ENCODE measurements at regions of chr17 and their contacts with region 1.

Region 1: DNA sequence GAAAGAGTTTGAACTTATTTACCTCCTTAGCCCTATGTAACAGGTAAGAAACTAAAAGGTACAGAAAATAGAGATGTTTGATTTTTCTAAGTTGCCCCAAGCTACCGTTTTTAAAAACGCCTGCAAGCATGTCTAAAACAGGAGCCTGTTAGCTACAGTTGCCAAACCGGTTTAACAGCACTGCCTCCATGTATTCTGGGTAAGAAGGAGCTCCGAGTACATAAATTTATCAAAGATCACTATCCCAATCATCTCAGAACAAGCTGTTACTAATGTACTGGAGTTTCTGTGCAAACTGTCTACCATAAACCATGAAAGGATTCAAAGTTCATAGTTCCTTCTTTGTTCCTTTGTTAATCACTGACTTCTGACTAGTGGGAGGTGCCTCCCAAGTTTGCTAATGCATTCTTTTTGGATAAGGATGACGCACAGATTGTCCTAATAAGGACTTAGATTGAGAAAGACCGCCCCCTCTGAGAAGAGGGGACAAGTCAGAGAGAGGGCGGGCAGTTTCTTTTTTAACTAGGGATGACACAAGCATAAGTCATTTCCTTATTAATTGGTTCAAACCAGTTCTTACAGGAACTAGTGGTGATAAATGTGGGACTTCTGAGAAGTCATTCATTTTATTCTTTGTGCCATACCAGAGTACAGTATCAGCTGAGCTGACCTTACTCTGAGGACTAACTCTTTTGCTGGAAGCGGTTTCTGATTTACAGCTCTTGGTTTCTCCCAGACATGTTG is 55.3 kb downstream of the TUBD1 start:
- DNase-seq: peak in 1 of 2 experiments; percentile 52
- H3K4me3 ChIP-seq: peak overlapping the region; percentile 87 to 98 (median 90)
- H3K27ac ChIP-seq: peak overlapping the region; percentile 96
- H3K4me1 ChIP-seq: peaks cover 0 to 4% (median 0%) of the 10 kb centered on the region in 4 experiments; a peak in 5 of 7 replicates
- H3K27me3 ChIP-seq: no peaks in the 10 kb centered on the region
- CTCF ChIP-seq: no peak
- EP300 ChIP-seq: peak in 1 of 2 experiments; percentile 23; a peak in 1 of 3 replicates
- POLR2A ChIP-seq: peak; percentile 97 to 99
- RAD21 ChIP-seq: no peak

Region 2: GRCh38 chr17:59707114-59707970 is 130.1 kb before region 1 on chr17 and contains the starts of genes PTRH2 and VMP1:
- CTCF ChIA-PET with region 1: no interaction called
- POLR2A ChIA-PET with region 1: interaction called, 13 read pairs
- DNase-seq: peak; percentile 92 to 98
- H3K4me3 ChIP-seq: peak within 1 kb of the TSS; percentile 94 to 99 (median 98)
- H3K27ac ChIP-seq: peak within 1 kb of the TSS; percentile 81
- H3K4me1 ChIP-seq: no peaks in the 10 kb centered on the region; a peak in 1 of 7 replicates
- H3K27me3 ChIP-seq: no peaks in the 10 kb centered on the region
- CTCF ChIP-seq: no peak
- EP300 ChIP-seq: no peak
- POLR2A ChIP-seq: peak; percentile 95 to 98
- RAD21 ChIP-seq: no peak
- total RNA-seq, gene PTRH2: 36.5 and 39.4 TPM in 2 replicates
- total RNA-seq, gene VMP1: 92.6 and 92.7 TPM in 2 replicates

Region 3: DNA sequence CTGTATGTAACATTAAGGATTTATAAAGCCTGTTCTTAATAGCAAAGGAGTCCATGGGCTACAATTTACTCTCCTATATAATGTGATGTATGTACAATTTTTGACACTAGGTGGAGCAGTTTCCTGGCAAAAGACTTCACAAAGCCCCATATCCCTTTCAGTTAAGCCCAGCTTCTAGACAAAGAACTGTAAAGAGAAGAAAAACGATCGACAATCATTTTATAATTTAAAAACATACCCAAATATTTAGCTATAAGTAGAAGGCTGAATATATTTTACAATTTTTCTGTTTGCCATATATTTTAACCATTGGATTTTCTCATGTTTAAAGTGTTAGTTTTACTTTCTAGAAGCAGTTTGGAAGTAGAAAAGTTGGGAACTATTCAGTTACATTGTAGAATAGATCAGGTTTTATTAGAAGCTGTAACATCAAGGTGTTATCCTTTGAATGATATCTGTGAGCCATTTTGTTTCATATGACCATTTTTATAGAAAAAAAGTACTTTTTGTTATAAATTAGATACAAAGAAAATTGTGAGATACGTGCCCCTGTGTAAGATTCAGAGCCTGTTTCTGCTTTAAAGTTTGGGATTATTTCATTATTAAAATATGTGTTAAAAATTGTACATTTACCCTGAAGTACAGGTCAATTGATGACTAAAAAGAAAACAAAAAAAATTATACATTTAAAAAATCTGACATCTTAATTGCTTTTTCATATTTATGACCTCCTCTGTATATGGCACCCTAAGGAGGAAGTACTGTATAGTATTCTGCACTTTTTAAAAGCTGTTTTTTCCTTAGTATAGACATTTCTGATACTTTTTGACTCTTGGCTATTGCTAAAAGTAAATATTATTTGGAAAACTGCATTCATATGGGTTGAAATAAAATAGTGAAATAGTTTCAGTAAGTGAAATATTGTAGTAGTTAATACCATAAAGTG is 83.7 kb before region 1 on chr17:
- CTCF ChIA-PET with region 1: interaction called, 32 read pairs
- POLR2A ChIA-PET with region 1: interaction called, 24 read pairs
- DNase-seq: no peak
- H3K4me3 ChIP-seq: no peak overlapping the region
- H3K27ac ChIP-seq: no peak overlapping the region
- H3K4me1 ChIP-seq: peaks cover 0 to 2% (median 0%) of the 10 kb centered on the region in 4 experiments; a peak in 1 of 7 replicates
- H3K27me3 ChIP-seq: no peaks in the 10 kb centered on the region
- CTCF ChIP-seq: peak in 2 of 3 experiments; percentile 54 to 59; a peak in 2 of 4 replicates
- EP300 ChIP-seq: no peak
- POLR2A ChIP-seq: no peak
- RAD21 ChIP-seq: peak; percentile 88

Region 4: DNA sequence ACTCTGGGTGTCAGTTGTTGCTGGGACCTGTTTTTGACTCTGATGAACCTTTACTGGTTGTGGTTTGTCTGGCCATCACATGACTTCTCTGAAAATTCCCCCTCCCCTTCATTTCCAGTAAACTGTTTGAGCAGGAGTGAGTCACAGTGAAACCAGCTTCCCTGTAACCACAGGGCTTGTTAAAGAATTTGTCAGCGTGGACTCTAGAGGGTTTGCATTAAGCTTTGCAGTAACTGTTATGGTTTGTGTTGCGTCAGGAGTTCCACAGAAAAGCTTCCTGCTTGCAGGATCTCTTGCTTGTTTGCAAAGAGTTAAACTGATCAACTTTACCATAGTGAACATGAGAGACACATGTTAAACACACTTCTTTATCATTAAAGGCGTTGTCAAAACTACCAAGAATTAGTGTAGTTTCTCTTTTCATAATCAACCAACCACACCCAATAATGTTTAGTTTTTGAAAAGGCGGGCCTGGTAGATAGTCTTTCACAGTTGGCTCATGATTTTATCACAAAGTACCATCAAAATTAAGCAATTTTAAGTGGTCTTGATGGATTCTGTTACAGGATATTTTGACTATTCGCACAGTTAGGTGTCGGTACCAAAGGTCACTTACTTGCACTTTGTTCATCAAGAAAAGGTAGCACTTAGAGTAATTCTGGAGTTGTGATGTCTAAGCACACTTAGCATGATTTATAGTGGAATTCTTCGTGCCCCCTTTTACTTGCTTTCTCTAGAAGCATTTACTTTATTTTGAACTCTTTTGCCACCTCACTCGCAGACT is 50.8 kb before region 1 on chr17:
- CTCF ChIA-PET with region 1: no interaction called
- POLR2A ChIA-PET with region 1: interaction called, 16 read pairs
- DNase-seq: peak in 1 of 2 experiments; percentile 29
- H3K4me3 ChIP-seq: no peak overlapping the region
- H3K27ac ChIP-seq: no peak overlapping the region; the same call in 1 of the 2 replicates
- H3K4me1 ChIP-seq: peaks cover 2 to 13% (median 11%) of the 10 kb centered on the region in 4 experiments; a peak in 4 of 7 replicates
- H3K27me3 ChIP-seq: no peaks in the 10 kb centered on the region
- CTCF ChIP-seq: no peak
- EP300 ChIP-seq: no peak
- POLR2A ChIP-seq: no peak
- RAD21 ChIP-seq: no peak

Measured in H1 (cell line).